H1 (cell line): ENCODE measurements at regions of chr4 and their contacts with region 1.

Region 1: GRCh38 chr4:37567841-37568240 is 118.3 kb downstream of the RELL1 start:
- DNase-seq: no peak
- H3K4me3 ChIP-seq: no peak overlapping the region
- H3K27ac ChIP-seq: no peak overlapping the region
- H3K4me1 ChIP-seq: peaks cover 0 to 4% (median 0%) of the 10 kb centered on the region in 4 experiments; a peak in 1 of 7 replicates
- H3K27me3 ChIP-seq: no peaks in the 10 kb centered on the region
- CTCF ChIP-seq: no peak
- EP300 ChIP-seq: no peak
- POLR2A ChIP-seq: no peak
- RAD21 ChIP-seq: no peak

Region 2: GRCh38 chr4:37434469-37434868 is 133.4 kb before region 1 on chr4:
- CTCF ChIA-PET with region 1: interaction called, 10 read pairs
- POLR2A ChIA-PET with region 1: no interaction called
- DNase-seq: no peak
- H3K4me3 ChIP-seq: no peak overlapping the region
- H3K27ac ChIP-seq: no peak overlapping the region
- H3K4me1 ChIP-seq: no peaks in the 10 kb centered on the region
- H3K27me3 ChIP-seq: no peaks in the 10 kb centered on the region
- CTCF ChIP-seq: peak in 2 of 3 experiments; percentile 26 to 27; a peak in 2 of 4 replicates
- EP300 ChIP-seq: no peak
- POLR2A ChIP-seq: no peak
- RAD21 ChIP-seq: peak; percentile 43 to 46

Region 3: GRCh38 chr4:37441276-37441994 is 126.4 kb before region 1 on chr4:
- CTCF ChIA-PET with region 1: interaction called, 22 read pairs
- POLR2A ChIA-PET with region 1: no interaction called
- DNase-seq: no peak
- H3K4me3 ChIP-seq: no peak overlapping the region
- H3K27ac ChIP-seq: no peak overlapping the region
- H3K4me1 ChIP-seq: no peaks in the 10 kb centered on the region
- H3K27me3 ChIP-seq: no peaks in the 10 kb centered on the region
- CTCF ChIP-seq: no peak
- EP300 ChIP-seq: no peak
- POLR2A ChIP-seq: no peak
- RAD21 ChIP-seq: no peak

Region 4: DNA sequence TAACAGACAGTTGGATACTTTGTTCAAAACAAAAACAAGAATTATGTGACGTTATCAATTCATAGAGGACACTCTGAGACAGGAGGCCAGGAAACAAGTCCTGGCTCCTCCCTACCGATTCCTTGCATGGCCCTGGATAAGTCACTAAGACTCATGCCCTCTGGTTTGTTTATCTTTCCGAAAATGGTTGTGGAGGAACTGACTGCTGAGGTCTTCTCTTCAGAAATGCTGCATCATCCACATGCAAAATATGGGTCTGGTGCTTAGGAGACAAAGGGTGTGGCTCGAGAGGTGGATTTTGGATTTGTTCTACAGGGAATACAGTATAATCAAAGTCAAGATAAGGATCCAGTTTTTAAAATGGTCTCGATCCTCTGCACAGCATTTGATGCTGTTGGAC is 12.5 kb before region 1 on chr4:
- CTCF ChIA-PET with region 1: interaction called, 19 read pairs
- POLR2A ChIA-PET with region 1: no interaction called
- DNase-seq: no peak
- H3K4me3 ChIP-seq: no peak overlapping the region
- H3K27ac ChIP-seq: no peak overlapping the region
- H3K4me1 ChIP-seq: no peaks in the 10 kb centered on the region
- H3K27me3 ChIP-seq: no peaks in the 10 kb centered on the region
- CTCF ChIP-seq: no peak
- EP300 ChIP-seq: no peak
- POLR2A ChIP-seq: no peak
- RAD21 ChIP-seq: no peak

Region 5: DNA sequence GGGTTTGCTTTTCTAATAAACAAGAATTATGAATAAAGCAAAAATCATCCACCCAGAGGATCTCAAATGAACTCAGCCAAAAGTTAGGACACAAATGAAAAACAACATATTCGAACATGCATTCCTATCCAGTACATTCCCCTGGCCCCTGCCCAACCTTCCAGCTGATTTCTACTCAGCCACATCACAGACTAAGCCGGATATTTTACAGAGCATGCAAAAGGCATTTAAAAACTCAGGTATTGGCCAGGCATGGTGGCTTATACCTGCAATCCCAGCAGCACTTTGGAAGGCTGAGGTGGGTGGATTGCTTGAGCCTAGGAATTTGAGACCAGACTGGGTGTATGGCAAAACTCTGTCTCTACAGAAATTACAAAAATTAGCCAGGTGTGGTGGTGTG is 63.7 kb after region 1 on chr4:
- CTCF ChIA-PET with region 1: no interaction called
- POLR2A ChIA-PET with region 1: no interaction called
- DNase-seq: no peak
- H3K4me3 ChIP-seq: no peak overlapping the region
- H3K27ac ChIP-seq: no peak overlapping the region
- H3K4me1 ChIP-seq: no peaks in the 10 kb centered on the region; a peak in 1 of 7 replicates
- H3K27me3 ChIP-seq: no peaks in the 10 kb centered on the region
- CTCF ChIP-seq: no peak
- EP300 ChIP-seq: no peak
- POLR2A ChIP-seq: no peak
- RAD21 ChIP-seq: no peak